Heart left ventricle (tissue), 16 donors: ENCODE measurements at regions of chr21 and their contacts with region 1.

Region 1: DNA sequence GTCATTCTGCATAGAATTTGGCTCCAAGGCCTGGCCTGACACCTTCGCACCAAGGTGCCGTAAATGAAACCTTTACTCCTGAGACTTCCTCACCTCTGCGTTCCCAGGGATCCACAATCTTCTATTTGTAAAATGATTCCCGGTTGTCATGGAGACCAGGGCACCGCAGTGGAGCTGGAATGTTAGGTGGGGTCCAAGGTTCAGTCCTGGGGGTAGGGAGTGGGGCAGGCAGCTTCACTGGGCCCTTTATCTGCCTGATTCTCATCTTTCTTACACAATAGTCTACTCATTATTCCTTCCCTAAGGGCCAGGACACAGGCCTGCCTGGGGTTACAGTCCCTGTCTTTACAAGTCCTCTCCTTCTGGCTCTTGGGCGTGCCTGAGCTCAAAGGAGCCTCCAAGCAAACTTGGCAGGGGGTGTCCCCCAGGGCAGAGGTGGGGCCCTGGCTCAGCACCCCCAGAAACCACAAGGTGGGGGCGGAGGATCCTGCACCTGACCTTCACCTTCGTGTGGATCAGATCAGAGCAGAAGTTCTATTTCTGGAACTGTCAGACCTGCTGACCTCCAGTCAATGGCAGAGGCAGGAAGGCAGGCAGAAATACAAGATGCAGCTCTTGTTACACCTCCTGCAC is 51.1 kb downstream of the RIPK4 start:
- DNase-seq: no peak
- ATAC-seq: no peak
- H3K4me3 ChIP-seq: no peak overlapping the region
- H3K27ac ChIP-seq: no peak overlapping the region
- H3K4me1 ChIP-seq: no peaks in the 10 kb centered on the region
- H3K27me3 ChIP-seq: peaks cover 4 to 56% (median 30%) of the 10 kb centered on the region in 9 donors
- CTCF ChIP-seq: no peak
- POLR2A ChIP-seq: no peak

Region 2: DNA sequence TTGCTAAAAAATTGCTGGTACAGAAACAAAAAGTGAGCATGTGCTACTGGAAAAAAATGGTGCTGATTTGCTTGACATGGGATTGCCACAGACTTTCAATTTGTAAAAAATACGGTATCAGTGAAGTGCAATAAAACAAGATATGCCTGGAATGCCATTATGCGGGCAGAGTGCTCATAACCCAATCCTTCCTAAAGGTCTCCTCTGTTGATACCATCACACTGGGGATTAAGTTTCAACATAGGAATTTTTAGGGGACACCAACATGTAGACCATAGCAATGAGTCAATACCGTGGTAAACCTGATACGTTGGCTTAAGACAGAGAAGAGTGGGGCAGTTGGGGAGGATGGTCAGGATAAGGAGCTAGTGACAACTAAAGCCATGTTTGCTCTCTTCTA is 269.2 kb before region 1 on chr21:
- intact Hi-C with region 1: no loop called
- DNase-seq: no peak
- ATAC-seq: no peak
- H3K4me3 ChIP-seq: no peak overlapping the region
- H3K27ac ChIP-seq: no peak overlapping the region
- H3K4me1 ChIP-seq: no peaks in the 10 kb centered on the region
- H3K27me3 ChIP-seq: no peaks in the 10 kb centered on the region
- CTCF ChIP-seq: no peak
- POLR2A ChIP-seq: no peak

Region 3: DNA sequence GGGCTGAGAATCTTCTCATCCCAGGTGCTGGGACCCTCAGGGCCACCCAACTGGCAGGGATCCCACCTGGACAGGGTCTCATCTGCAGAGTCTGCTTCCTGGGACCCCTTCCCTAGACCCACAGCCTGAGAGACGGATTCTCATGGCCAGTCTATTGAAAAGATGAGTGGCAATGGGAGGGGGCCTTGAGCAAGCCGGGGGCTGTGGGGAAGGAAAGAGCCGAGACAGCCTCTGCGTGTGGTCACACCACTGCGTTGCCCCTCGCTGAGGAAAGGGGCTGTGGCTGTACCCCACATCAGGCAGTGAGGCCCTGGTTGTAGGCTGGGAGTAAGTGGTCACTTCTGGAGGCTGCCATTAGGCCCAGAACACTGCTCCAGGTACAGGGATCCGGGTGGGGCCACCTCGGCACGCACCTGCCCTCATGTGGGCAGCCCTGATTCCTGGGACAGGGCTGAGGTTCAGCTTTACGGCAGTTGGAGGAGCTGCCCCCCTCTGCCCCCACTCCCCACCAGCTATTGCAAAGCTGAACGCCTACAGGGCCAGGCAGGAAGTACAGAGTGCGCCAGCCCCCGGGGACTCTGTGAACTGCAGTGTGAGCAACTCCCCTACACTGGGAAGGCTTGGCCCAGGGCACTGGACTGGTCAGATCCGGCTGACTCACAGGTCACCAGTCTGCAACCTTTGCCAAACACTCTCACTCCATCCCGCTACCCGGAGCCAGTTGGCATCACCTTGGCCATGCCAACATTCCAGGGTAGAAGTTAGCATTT is 55.8 kb before region 1 on chr21:
- intact Hi-C with region 1: loop called in 1 of 10 experiments (anchors 10 kb)
- DNase-seq: no peak
- ATAC-seq: peak in 2 of 4 donors; percentile 26 to 44
- H3K4me3 ChIP-seq: no peak overlapping the region
- H3K27ac ChIP-seq: no peak overlapping the region
- H3K4me1 ChIP-seq: peaks cover 0 to 13% (median 0%) of the 10 kb centered on the region in 12 donors
- H3K27me3 ChIP-seq: peaks cover 0 to 2% (median 0%) of the 10 kb centered on the region in 9 donors
- CTCF ChIP-seq: no peak
- POLR2A ChIP-seq: no peak